ENCODE measurements at regions of chr19 and their contacts with region 1.

Region 1: GRCh38 chr19:22532388-22533300 is 101.5 kb upstream of the ZNF492 start:
- DNase-seq: peak; percentile 97
- H3K4me3 ChIP-seq: peak overlapping the region; percentile 42 to 59 (median 48)
- H3K27ac ChIP-seq: peak overlapping the region; percentile 14 to 77 (median 62)
- H3K4me1 ChIP-seq: peaks cover 0 to 16% (median 0%) of the 10 kb centered on the region in 4 donors
- H3K27me3 ChIP-seq: peaks cover 0 to 8% (median 0%) of the 10 kb centered on the region in 3 donors
- CTCF ChIP-seq: peak in 1 of 4 experiments; percentile 31
- EP300 ChIP-seq: no peak
- POLR2A ChIP-seq: peak; percentile 29 to 68

Region 2: GRCh38 chr19:21751379-21751778 is 781.3 kb before region 1 on chr19:
- intact Hi-C with region 1: no loop called
- DNase-seq: no peak
- H3K4me3 ChIP-seq: no peak overlapping the region
- H3K27ac ChIP-seq: peak overlapping the region in 1 of 4 donors; percentile 29
- H3K4me1 ChIP-seq: peaks cover 0 to 45% (median 37%) of the 10 kb centered on the region in 4 donors
- H3K27me3 ChIP-seq: no peaks in the 10 kb centered on the region
- CTCF ChIP-seq: no peak
- EP300 ChIP-seq: no peak
- POLR2A ChIP-seq: no peak

Region 3: DNA sequence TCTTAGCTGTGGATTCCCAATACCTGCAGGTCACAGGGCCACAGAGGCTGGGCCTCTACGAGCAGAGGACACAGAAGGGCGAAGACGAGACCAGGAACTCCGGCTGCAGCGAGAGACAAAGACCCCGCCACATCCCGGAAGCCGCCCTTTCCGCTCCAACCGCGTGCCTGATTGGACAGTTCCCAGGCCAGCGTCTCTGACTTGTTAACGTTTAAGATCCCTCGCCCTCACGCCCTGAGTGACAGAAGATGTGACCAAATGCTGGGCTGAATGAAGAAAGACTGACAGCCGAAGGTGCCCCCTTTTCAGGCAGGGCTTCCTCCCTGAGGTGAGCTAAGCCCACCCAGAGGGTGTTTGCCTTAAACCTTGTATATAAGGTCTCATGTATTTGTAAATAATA is 110.4 kb before region 1 on chr19 and contains the start of gene ZNF98:
- intact Hi-C with region 1: loop called (anchors 10 kb)
- DNase-seq: peak; percentile 78
- H3K4me3 ChIP-seq: peak within 1 kb of the TSS; percentile 12 to 38 (median 29)
- H3K27ac ChIP-seq: no peak within 1 kb of the TSS
- H3K4me1 ChIP-seq: no peaks in the 10 kb centered on the region
- H3K27me3 ChIP-seq: peaks cover 0 to 11% (median 0%) of the 10 kb centered on the region in 3 donors
- CTCF ChIP-seq: no peak
- EP300 ChIP-seq: no peak
- POLR2A ChIP-seq: no peak
- total RNA-seq, gene ZNF98: 1.8 to 10.0 (median 3.8) TPM in 3 of 4 donors, not detected in the other

Region 4: GRCh38 chr19:22491746-22492145 is 40.9 kb before region 1 on chr19:
- intact Hi-C with region 1: no loop called
- DNase-seq: no peak
- H3K4me3 ChIP-seq: no peak overlapping the region
- H3K27ac ChIP-seq: no peak overlapping the region
- H3K4me1 ChIP-seq: no peaks in the 10 kb centered on the region
- H3K27me3 ChIP-seq: no peaks in the 10 kb centered on the region
- CTCF ChIP-seq: no peak
- EP300 ChIP-seq: no peak
- POLR2A ChIP-seq: no peak